Aorta (tissue), 5 donors: ENCODE measurements at regions of chr9 and their contacts with region 1.

Region 1: GRCh38 chr9:6055213-6055612 is 39.8 kb upstream of the RANBP6 start:
- DNase-seq: no peak
- ATAC-seq: no peak
- H3K4me3 ChIP-seq: no peak overlapping the region
- H3K27ac ChIP-seq: no peak overlapping the region
- H3K4me1 ChIP-seq: no peaks in the 10 kb centered on the region
- H3K27me3 ChIP-seq: no peaks in the 10 kb centered on the region

Region 2: GRCh38 chr9:5886114-5886939 is 168.9 kb before region 1 on chr9:
- intact Hi-C with region 1: loop called (anchors 1 to 2 kb)
- DNase-seq: peak; percentile 77 to 90
- ATAC-seq: peak; percentile 64
- H3K4me3 ChIP-seq: no peak overlapping the region
- H3K27ac ChIP-seq: no peak overlapping the region
- H3K4me1 ChIP-seq: no peaks in the 10 kb centered on the region
- H3K27me3 ChIP-seq: no peaks in the 10 kb centered on the region

Region 3: DNA sequence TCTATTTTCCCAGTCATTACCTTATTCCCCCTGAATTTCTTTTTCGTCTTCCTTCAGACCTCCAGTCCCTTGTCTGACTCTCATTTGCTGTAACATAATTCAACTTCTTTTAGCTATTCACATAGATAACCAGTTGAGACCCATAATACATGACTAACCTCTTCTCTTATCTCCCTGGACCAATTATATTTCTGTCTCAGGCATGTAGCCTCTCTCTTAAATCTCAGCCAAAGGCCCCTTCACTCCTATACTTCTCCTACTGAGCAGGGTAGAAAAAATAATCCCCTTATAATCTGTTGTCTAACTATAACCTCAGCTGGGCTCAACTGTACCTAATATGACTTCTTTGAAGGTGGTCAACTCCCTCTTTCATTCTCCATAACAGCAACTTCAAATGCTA is 60.7 kb before region 1 on chr9:
- intact Hi-C with region 1: no loop called
- DNase-seq: no peak
- ATAC-seq: no peak
- H3K4me3 ChIP-seq: no peak overlapping the region
- H3K27ac ChIP-seq: no peak overlapping the region
- H3K4me1 ChIP-seq: peaks cover 0 to 3% of the 10 kb centered on the region in 2 donors
- H3K27me3 ChIP-seq: no peaks in the 10 kb centered on the region